ENCODE measurements at regions of chr2 and their contacts with region 1.

Region 1: GRCh38 chr2:121356058-121356640 is 71.1 kb upstream of the TFCP2L1 start:
- DNase-seq: no peak
- ATAC-seq: peak; percentile 81
- H3K4me3 ChIP-seq: no peak overlapping the region
- H3K27ac ChIP-seq: no peak overlapping the region
- H3K4me1 ChIP-seq: no peaks in the 10 kb centered on the region
- H3K27me3 ChIP-seq: no peaks in the 10 kb centered on the region
- CTCF ChIP-seq: peak; percentile 54 to 64 (median 55)
- EP300 ChIP-seq: no peak
- POLR2A ChIP-seq: no peak
- RAD21 ChIP-seq: peak; percentile 46

Region 2: GRCh38 chr2:119730671-119731193 is 1625.4 kb before region 1 on chr2:
- CTCF ChIA-PET with region 1: no interaction called
- POLR2A ChIA-PET with region 1: no interaction called
- RAD21 ChIA-PET with region 1: no interaction called
- SMC1A ChIA-PET with region 1: no interaction called
- in situ Hi-C with region 1: no loop called
- intact Hi-C with region 1: no loop called
- DNase-seq: no peak
- ATAC-seq: no peak
- H3K4me3 ChIP-seq: no peak overlapping the region
- H3K27ac ChIP-seq: no peak overlapping the region
- H3K4me1 ChIP-seq: no peaks in the 10 kb centered on the region
- H3K27me3 ChIP-seq: no peaks in the 10 kb centered on the region; a peak in 2 of 4 replicates
- CTCF ChIP-seq: no peak
- EP300 ChIP-seq: no peak
- POLR2A ChIP-seq: no peak
- RAD21 ChIP-seq: no peak

Region 3: DNA sequence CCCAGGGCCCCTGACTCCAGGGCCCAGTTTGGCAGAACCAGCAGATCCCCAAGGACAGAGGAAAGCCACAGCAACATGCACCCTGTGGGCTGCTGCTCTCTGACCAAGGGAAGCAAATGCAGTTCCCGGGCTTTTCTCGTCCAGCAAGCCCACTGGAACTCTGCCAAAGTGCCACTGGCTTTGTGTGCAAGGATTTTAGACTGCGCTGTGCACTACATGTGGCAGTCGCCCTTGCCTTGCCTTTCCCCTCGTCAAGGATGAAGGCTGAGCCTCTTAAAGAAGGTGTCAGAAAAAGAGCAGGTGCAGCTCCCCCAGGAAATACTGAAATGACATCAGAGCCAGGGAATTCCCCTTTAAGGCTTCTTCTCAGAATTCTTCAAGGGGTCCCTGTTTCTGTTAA is 270.3 kb before region 1 on chr2:
- CTCF ChIA-PET with region 1: interaction called, 32 read pairs
- POLR2A ChIA-PET with region 1: no interaction called
- RAD21 ChIA-PET with region 1: interaction called, 8 read pairs
- SMC1A ChIA-PET with region 1: interaction called, 6 read pairs
- in situ Hi-C with region 1: no loop called
- intact Hi-C with region 1: loop called (anchors 1 kb)
- DNase-seq: no peak
- ATAC-seq: peak; percentile 66; the same call in 2 of the 3 replicates
- H3K4me3 ChIP-seq: no peak overlapping the region
- H3K27ac ChIP-seq: no peak overlapping the region
- H3K4me1 ChIP-seq: no peaks in the 10 kb centered on the region
- H3K27me3 ChIP-seq: no peaks in the 10 kb centered on the region; a peak in 1 of 4 replicates
- CTCF ChIP-seq: no peak
- EP300 ChIP-seq: no peak
- POLR2A ChIP-seq: no peak
- RAD21 ChIP-seq: no peak

Region 4: GRCh38 chr2:121095257-121096080 is 260.7 kb before region 1 on chr2:
- CTCF ChIA-PET with region 1: interaction called, 12 read pairs
- POLR2A ChIA-PET with region 1: no interaction called
- RAD21 ChIA-PET with region 1: interaction called, 4 read pairs
- SMC1A ChIA-PET with region 1: no interaction called
- in situ Hi-C with region 1: no loop called
- intact Hi-C with region 1: loop called (anchors 2 kb)
- DNase-seq: no peak
- ATAC-seq: peak; percentile 86
- H3K4me3 ChIP-seq: no peak overlapping the region
- H3K27ac ChIP-seq: no peak overlapping the region
- H3K4me1 ChIP-seq: no peaks in the 10 kb centered on the region
- H3K27me3 ChIP-seq: peaks cover 1 to 2% of the 10 kb centered on the region in 2 experiments; a peak in 2 of 4 replicates
- CTCF ChIP-seq: peak; percentile 62 to 69 (median 65)
- EP300 ChIP-seq: no peak
- POLR2A ChIP-seq: no peak
- RAD21 ChIP-seq: peak; percentile 58

Region 5: GRCh38 chr2:121345887-121346286 is 10.3 kb before region 1 on chr2:
- CTCF ChIA-PET with region 1: interaction called, 14 read pairs
- POLR2A ChIA-PET with region 1: no interaction called
- RAD21 ChIA-PET with region 1: no interaction called
- SMC1A ChIA-PET with region 1: interaction called, 3 read pairs
- in situ Hi-C with region 1: no loop called
- intact Hi-C with region 1: no loop called
- DNase-seq: no peak
- ATAC-seq: no peak
- H3K4me3 ChIP-seq: no peak overlapping the region
- H3K27ac ChIP-seq: no peak overlapping the region
- H3K4me1 ChIP-seq: no peaks in the 10 kb centered on the region
- H3K27me3 ChIP-seq: no peaks in the 10 kb centered on the region
- CTCF ChIP-seq: no peak
- EP300 ChIP-seq: no peak
- POLR2A ChIP-seq: no peak
- RAD21 ChIP-seq: no peak

Measured in GM12878 (cell line).